Activated CD4-positive, alpha-beta memory T cell treated with anti-CD3 and anti-CD28 coated beads for 36 hours (primary cell): ENCODE measurements at regions of chr6 and their contacts with region 1.

Region 1: GRCh38 chr6:13711733-13712598 is at the start of gene RANBP9:
- DNase-seq: peak; percentile 90
- H3K4me3 Mint-ChIP-seq: peak within 1 kb of the TSS; percentile 89
- H3K27ac Mint-ChIP-seq: peak within 1 kb of the TSS; percentile 99
- H3K4me1 Mint-ChIP-seq: peaks cover 52% of the 10 kb centered on the region
- H3K27me3 Mint-ChIP-seq: no peaks in the 10 kb centered on the region
- total RNA-seq, gene RANBP9: 63.7 to 66.2 TPM

Region 2: DNA sequence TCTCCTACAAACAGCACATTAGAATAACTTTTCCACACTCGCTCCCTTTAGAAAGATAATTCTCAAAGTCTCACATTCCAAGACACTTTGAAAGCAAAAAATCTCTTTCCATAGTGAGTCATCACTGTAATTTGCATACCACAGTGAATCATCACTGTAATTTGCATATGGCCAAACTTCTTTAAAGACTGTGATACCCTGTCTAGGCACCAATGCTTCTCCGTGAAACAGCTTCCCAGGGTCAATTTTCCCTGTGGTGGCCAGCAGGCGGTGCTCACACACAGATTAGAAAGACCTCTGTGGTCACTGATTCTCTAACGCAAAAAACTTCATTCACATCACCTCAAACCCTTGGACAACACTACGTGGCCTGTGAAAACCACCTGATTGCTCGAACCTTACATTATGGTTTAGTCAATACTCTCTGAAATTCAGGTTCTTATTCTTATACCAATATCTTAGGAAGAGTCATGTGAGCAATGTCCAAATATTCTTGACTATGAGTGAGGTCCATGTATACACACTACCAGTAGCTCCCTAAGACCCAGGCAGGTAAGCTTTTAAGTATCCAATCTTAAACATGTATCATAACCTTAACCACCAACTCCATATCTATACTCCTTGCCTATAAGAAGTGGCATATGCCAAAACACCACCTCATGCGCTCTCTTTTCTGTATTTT is 1073.9 kb before region 1 on chr6:
- CTCF ChIA-PET with region 1: no interaction called
- POLR2A ChIA-PET with region 1: no interaction called
- intact Hi-C with region 1: no loop called
- DNase-seq: peak; percentile 57
- H3K4me3 Mint-ChIP-seq: no peak overlapping the region
- H3K27ac Mint-ChIP-seq: no peak overlapping the region
- H3K4me1 Mint-ChIP-seq: no peaks in the 10 kb centered on the region
- H3K27me3 Mint-ChIP-seq: peaks cover 24% of the 10 kb centered on the region

Region 3: DNA sequence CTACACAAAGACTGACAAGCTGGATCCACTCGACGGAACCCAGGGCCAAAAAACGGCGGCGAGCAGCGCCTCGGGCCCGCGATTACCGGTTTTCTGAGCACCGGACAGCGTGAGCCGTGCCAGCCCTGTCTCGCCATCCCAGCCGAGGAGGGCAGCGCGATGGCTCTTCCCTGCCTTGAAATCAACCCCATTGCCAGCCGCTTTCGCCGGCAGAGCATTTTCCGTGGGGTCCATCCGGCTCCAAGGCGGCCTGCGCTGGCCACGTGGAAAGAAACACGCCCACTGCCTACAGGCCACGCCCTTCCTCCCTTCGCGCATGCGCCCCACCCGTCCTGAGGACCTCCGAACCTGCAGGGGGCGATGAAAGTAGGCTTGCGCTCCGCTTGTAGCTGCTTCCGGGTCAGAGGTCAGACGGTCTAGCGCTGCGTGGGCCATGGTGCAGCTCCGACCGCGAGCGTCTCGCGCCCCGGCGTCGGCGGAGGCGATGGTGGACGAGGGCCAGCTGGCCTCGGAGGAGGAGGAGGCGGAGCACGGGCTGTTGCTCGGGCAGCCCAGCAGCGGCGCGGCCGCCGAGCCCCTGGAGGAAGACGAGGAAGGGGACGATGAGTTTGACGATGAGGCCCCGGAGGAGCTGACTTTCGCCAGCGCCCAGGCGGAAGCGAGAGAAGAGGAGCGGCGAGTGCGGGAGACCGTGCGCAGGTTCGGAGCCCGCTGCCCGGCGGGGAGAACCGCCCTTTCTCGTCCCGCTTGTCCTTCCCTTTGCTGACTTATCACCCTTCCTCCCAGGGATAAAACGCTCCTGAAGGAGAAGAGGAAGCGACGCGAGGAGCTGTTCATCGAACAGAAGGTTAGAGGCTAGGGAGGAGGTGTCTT is 96.8 kb before region 1 on chr6 and contains the start of gene NOL7:
- CTCF ChIA-PET with region 1: interaction called, 43 read pairs
- POLR2A ChIA-PET with region 1: interaction called, 32 read pairs
- intact Hi-C with region 1: loop called (anchors 1 kb)
- DNase-seq: peak; percentile 99
- H3K4me3 Mint-ChIP-seq: peak within 1 kb of the TSS; percentile 87
- H3K27ac Mint-ChIP-seq: peak within 1 kb of the TSS; percentile 92
- H3K4me1 Mint-ChIP-seq: peaks cover 44% of the 10 kb centered on the region
- H3K27me3 Mint-ChIP-seq: no peaks in the 10 kb centered on the region
- total RNA-seq, gene NOL7: 88.0 to 94.9 TPM

Region 4: DNA sequence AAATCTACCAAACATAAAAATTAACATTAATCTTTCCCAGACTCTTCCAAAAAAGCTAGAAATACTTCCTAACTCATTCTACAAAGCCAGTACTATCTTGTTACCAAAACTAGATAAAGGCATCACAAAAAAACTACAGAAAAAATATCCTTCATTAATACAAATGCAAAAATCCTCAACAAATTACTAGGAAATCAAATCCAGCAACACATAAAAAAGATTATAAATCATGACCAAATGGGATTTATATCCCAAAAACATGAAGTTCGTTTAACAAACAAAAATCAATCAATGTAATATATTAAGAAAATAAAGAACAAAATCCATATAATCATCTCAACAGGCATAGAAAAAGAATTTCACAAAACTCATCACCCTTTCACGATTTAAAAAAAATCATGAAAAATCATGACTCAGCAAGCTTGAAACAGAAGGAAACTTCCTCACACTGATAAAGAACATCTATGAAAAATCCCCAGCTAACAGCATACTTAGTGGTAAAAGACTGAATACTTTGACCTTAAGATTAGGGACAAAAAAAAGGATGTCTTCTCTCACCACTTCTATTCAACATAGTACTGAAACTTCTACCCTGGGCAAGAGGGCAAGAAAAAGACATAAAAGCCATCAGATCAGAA is 43.6 kb before region 1 on chr6:
- CTCF ChIA-PET with region 1: no interaction called
- POLR2A ChIA-PET with region 1: no interaction called
- intact Hi-C with region 1: loop called (anchors 2 kb)
- DNase-seq: no peak
- H3K4me3 Mint-ChIP-seq: no peak overlapping the region
- H3K27ac Mint-ChIP-seq: peak overlapping the region; percentile 68
- H3K4me1 Mint-ChIP-seq: peaks cover 86% of the 10 kb centered on the region
- H3K27me3 Mint-ChIP-seq: no peaks in the 10 kb centered on the region

Region 5: DNA sequence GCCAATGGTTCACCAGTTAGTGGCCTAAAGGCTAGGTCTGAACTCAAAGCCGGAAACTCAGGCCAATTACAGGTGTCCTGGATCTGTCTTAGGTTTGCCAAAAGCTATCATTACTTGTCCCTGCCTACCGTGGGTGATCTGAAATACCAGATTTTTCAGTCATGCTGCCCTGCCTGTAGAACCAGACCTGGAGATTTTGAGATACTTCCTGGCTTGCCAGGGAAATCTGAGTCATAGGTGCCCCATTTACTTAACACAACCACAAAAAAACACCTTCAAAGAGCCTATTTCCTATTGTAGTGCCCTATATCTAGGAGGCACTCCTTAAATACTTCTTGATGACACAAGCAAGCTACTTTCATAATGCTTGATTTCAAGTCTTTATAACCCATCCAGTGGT is 13.6 kb after region 1 on chr6:
- CTCF ChIA-PET with region 1: interaction called, 3 read pairs
- POLR2A ChIA-PET with region 1: no interaction called
- intact Hi-C with region 1: loop called (anchors 1 kb)
- DNase-seq: peak; percentile 58
- H3K4me3 Mint-ChIP-seq: peak overlapping the region; percentile 13
- H3K27ac Mint-ChIP-seq: peak overlapping the region; percentile 38
- H3K4me1 Mint-ChIP-seq: peaks cover 32% of the 10 kb centered on the region
- H3K27me3 Mint-ChIP-seq: no peaks in the 10 kb centered on the region

Region 6: GRCh38 chr6:13767121-13767808 is 55.3 kb after region 1 on chr6:
- CTCF ChIA-PET with region 1: interaction called, 4 read pairs
- POLR2A ChIA-PET with region 1: interaction called, 11 read pairs
- intact Hi-C with region 1: loop called (anchors 1 kb)
- DNase-seq: peak; percentile 46
- H3K4me3 Mint-ChIP-seq: peak overlapping the region; percentile 52
- H3K27ac Mint-ChIP-seq: no peak overlapping the region
- H3K4me1 Mint-ChIP-seq: peaks cover 31% of the 10 kb centered on the region
- H3K27me3 Mint-ChIP-seq: no peaks in the 10 kb centered on the region

Region 7: GRCh38 chr6:13795041-13795750 is 83.2 kb after region 1 on chr6:
- CTCF ChIA-PET with region 1: interaction called, 4 read pairs
- POLR2A ChIA-PET with region 1: interaction called, 4 read pairs
- intact Hi-C with region 1: loop called (anchors 2 kb)
- DNase-seq: peak; percentile 93
- H3K4me3 Mint-ChIP-seq: no peak overlapping the region
- H3K27ac Mint-ChIP-seq: no peak overlapping the region
- H3K4me1 Mint-ChIP-seq: peaks cover 24% of the 10 kb centered on the region
- H3K27me3 Mint-ChIP-seq: no peaks in the 10 kb centered on the region